ENCODE measurements at regions of chr4 and their contacts with region 1.

Region 1: GRCh38 chr4:5050520-5051277 is 581 bp upstream of the STK32B start:
- DNase-seq: peak; percentile 56
- H3K4me3 ChIP-seq: peak overlapping the region; percentile 31
- H3K27ac ChIP-seq: no peak overlapping the region
- H3K4me1 ChIP-seq: no peaks in the 10 kb centered on the region
- H3K27me3 ChIP-seq: peaks cover 22% of the 10 kb centered on the region
- CTCF ChIP-seq: peak; percentile 27

Region 2: DNA sequence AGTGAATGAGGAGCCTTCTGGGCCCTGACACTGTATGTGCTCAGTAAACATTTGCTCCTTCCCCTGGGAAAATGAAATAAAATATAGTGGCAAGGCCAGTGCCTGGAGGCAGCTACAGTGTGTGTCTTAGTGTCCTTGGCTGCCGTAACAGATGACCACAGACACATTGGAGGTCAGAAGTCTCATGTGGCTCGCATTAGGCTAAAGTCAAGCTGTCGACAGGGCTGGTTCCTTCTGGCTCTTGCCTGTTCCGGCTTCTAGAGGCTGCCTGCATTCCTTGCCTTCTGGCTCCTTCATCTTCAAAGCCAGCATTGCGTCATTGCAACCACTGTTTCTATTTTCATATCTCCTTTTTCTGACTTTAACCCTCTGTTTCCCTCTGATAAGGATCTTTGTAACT is 425.2 kb before region 1 on chr4:
- intact Hi-C with region 1: no loop called
- DNase-seq: no peak
- H3K4me3 ChIP-seq: no peak overlapping the region
- H3K27ac ChIP-seq: no peak overlapping the region
- H3K4me1 ChIP-seq: no peaks in the 10 kb centered on the region
- H3K27me3 ChIP-seq: no peaks in the 10 kb centered on the region
- CTCF ChIP-seq: no peak

Region 3: DNA sequence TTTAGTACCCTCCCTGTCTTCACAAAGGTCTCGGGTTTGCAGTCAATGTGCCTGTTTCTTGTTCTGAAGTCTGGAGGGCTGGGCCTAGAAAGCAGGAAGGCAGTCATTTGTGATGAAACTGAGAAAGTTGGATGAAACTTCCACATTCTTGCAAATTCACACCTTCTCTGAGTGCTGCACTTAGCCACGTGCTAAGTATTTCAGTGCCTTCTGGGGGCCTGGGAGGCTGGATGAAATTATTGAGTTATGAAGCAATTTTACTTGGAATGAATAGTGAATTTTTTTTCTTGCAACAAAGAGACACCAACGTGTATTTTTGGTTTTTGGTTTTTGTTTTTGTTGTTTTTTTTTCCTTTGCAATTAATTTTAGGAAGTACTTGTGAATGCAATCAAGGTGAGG is 120.0 kb before region 1 on chr4:
- intact Hi-C with region 1: no loop called
- DNase-seq: no peak
- H3K4me3 ChIP-seq: no peak overlapping the region
- H3K27ac ChIP-seq: no peak overlapping the region
- H3K4me1 ChIP-seq: no peaks in the 10 kb centered on the region
- H3K27me3 ChIP-seq: no peaks in the 10 kb centered on the region
- CTCF ChIP-seq: no peak

Region 4: GRCh38 chr4:4985844-4986243 is 64.9 kb before region 1 on chr4:
- intact Hi-C with region 1: no loop called
- DNase-seq: no peak
- H3K4me3 ChIP-seq: no peak overlapping the region
- H3K27ac ChIP-seq: no peak overlapping the region
- H3K4me1 ChIP-seq: no peaks in the 10 kb centered on the region
- H3K27me3 ChIP-seq: no peaks in the 10 kb centered on the region
- CTCF ChIP-seq: no peak

Region 5: DNA sequence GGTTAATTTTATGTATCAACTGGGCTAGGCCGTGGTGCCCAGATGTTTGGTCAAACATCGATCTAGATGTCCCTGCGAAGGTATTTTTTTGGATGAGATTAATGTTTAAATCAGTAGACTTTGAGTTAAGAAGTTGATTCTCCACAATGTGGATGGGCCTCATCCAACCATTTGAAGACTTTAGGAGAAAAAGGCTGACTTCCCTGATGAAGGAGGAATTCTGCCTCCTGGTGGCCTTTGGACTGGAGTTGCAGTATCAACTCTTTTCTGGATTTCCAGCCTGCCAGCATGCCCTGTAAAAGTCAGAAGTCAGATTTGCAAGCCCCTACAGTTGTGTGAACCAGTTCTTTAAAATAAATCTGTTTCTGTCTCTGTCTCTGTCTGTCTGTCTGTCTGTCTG is 92.0 kb after region 1 on chr4:
- intact Hi-C with region 1: loop called (anchors 10 kb)
- DNase-seq: no peak
- H3K4me3 ChIP-seq: no peak overlapping the region
- H3K27ac ChIP-seq: no peak overlapping the region
- H3K4me1 ChIP-seq: no peaks in the 10 kb centered on the region
- H3K27me3 ChIP-seq: no peaks in the 10 kb centered on the region
- CTCF ChIP-seq: no peak

Region 6: GRCh38 chr4:5220028-5220427 is 169.3 kb after region 1 on chr4:
- intact Hi-C with region 1: no loop called
- DNase-seq: no peak
- H3K4me3 ChIP-seq: no peak overlapping the region
- H3K27ac ChIP-seq: no peak overlapping the region
- H3K4me1 ChIP-seq: no peaks in the 10 kb centered on the region
- H3K27me3 ChIP-seq: no peaks in the 10 kb centered on the region
- CTCF ChIP-seq: no peak

Measured in colonic mucosa (tissue), 4 donors.